ENCODE measurements at regions of chr9 and their contacts with region 1.

Region 1: GRCh38 chr9:129641746-129642513 is at the start of gene ASB6:
- H3K4me3 Mint-ChIP-seq: peak within 1 kb of the TSS; percentile 90
- H3K27ac Mint-ChIP-seq: peak within 1 kb of the TSS; percentile 82
- H3K4me1 Mint-ChIP-seq: peaks cover 48% of the 10 kb centered on the region
- H3K27me3 Mint-ChIP-seq: peaks cover 4% of the 10 kb centered on the region

Region 2: GRCh38 chr9:129626079-129626624 is 15.8 kb before region 1 on chr9 and contains the start of gene NTMT1:
- intact Hi-C with region 1: loop called (anchors 2 kb)
- H3K4me3 Mint-ChIP-seq: peak within 1 kb of the TSS; percentile 86
- H3K27ac Mint-ChIP-seq: peak within 1 kb of the TSS; percentile 96
- H3K4me1 Mint-ChIP-seq: peaks cover 71% of the 10 kb centered on the region
- H3K27me3 Mint-ChIP-seq: peaks cover 7% of the 10 kb centered on the region

Region 3: DNA sequence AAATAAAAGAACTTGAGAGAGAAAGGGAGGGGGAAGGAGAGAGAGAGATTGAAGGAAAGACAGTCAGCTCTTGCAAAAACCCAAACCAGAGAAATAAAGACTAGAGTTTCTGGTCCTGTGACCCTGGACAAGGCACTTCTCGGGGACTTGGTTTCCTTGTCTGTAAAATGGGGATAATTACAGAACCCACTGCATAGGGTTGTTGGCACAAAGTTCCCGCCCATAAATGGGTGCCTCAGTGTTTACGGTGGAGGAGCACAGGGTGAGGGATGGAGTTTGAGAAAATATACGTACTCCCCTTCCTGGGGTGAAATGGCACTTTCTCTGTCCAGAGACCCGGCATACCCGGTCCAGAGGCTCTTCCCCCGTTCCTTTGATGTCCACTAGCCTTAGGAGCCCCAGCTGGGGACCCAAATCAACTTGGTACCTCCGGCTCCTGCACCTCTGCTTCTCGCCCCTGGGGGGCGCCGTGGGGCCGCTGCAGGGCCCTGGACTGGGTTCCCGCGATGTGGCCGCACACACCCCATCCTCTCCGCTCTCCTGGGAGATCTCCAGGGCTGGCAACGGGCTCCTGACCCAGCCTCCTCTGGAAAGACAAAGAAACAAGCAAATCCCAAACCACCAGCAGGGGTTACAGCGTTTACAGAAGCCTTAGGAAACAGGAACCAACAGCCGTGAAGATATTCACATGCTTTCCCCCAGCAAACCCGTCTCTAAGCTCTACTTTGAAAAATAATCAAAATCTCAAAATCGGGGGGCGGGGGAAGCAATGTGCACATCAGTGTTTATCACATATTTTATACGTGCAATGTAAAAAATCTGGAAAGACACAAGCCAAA is 84.6 kb after region 1 on chr9:
- intact Hi-C with region 1: loop called (anchors 10 kb)
- H3K4me3 Mint-ChIP-seq: peak overlapping the region; percentile 53
- H3K27ac Mint-ChIP-seq: no peak overlapping the region
- H3K4me1 Mint-ChIP-seq: peaks cover 11% of the 10 kb centered on the region
- H3K27me3 Mint-ChIP-seq: peaks cover 43% of the 10 kb centered on the region

Measured in dendritic cell treated with granulocyte-macrophage colony-stimulating factor and Interleukin-4, amounts not matched to agents 40 ng/mL and 50 ng/mL, for 4 days (primary cell).